ENCODE measurements at regions of chr5 and their contacts with region 1.

Region 1: GRCh38 chr5:135829681-135830383 is 4.6 kb upstream of the SLC25A48 start:
- DNase-seq: peak in 2 of 3 donors; percentile 51 to 62
- ATAC-seq: peak; percentile 10 to 50 (median 36)
- H3K4me3 ChIP-seq: no peak overlapping the region
- H3K27ac ChIP-seq: no peak overlapping the region
- H3K4me1 ChIP-seq: no peaks in the 10 kb centered on the region
- H3K27me3 ChIP-seq: no peaks in the 10 kb centered on the region
- CTCF ChIP-seq: peak; percentile 40 to 76 (median 54)
- POLR2A ChIP-seq: no peak

Region 2: GRCh38 chr5:135560858-135561257 is 269.0 kb before region 1 on chr5:
- intact Hi-C with region 1: loop called in 1 of 2 experiments (anchors 10 kb)
- DNase-seq: peak; percentile 71 to 78 (median 77)
- ATAC-seq: peak; percentile 87 to 98 (median 92)
- H3K4me3 ChIP-seq: no peak overlapping the region
- H3K27ac ChIP-seq: no peak overlapping the region
- H3K4me1 ChIP-seq: no peaks in the 10 kb centered on the region
- H3K27me3 ChIP-seq: no peaks in the 10 kb centered on the region
- CTCF ChIP-seq: peak; percentile 56 to 86 (median 80)
- POLR2A ChIP-seq: no peak

Region 3: DNA sequence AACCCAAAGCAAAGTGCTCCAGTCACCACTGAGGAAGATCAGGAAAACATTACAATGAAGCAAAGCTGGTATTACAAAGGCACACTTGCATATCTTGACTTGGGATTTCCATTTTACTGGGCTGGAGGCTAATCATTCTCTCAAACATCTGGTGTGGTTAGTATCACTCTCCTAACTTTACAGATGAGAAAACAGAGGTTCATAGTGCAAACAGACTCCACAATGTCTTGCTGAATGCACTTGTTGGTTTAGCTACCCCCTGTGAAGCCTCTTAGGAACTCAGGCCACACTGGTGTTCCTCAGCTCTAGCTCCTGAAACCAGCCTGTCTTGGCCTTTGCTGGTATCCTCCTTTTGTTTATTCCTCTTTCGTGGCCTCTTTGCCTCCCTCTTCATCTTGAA is 273.3 kb after region 1 on chr5:
- intact Hi-C with region 1: no loop called
- DNase-seq: peak in 1 of 3 donors; percentile 3
- ATAC-seq: no peak
- H3K4me3 ChIP-seq: no peak overlapping the region
- H3K27ac ChIP-seq: no peak overlapping the region
- H3K4me1 ChIP-seq: peaks cover 0 to 6% (median 3%) of the 10 kb centered on the region in 4 donors
- H3K27me3 ChIP-seq: no peaks in the 10 kb centered on the region
- CTCF ChIP-seq: no peak
- POLR2A ChIP-seq: no peak

Measured in right lobe of liver (tissue), 6 donors.